Dorsolateral prefrontal cortex (tissue), 120 donors: ENCODE measurements at regions of chr12 and their contacts with region 1.

Region 1: GRCh38 chr12:121499929-121500793 is 80.7 kb downstream of the KDM2B start:
- DNase-seq: peak; percentile 75 to 88 (median 82)
- H3K4me3 ChIP-seq: peak overlapping the region in 51 of 59 donors; percentile 6 to 58 (median 38)
- H3K27ac ChIP-seq: peak overlapping the region in 52 of 59 donors; percentile 8 to 90 (median 71)
- H3K27me3 ChIP-seq: no peaks in the 10 kb centered on the region
- CTCF ChIP-seq: peak; percentile 91 to 100 (median 97)

Region 2: GRCh38 chr12:121579981-121580868 is 80.1 kb after region 1 on chr12:
- intact Hi-C with region 1: loop called in 1 of 2 experiments (anchors 5 kb)
- DNase-seq: peak; percentile 71 to 82 (median 76)
- H3K4me3 ChIP-seq: peak overlapping the region; percentile 42 to 90 (median 75)
- H3K27ac ChIP-seq: peak overlapping the region; percentile 72 to 97 (median 94)
- H3K27me3 ChIP-seq: no peaks in the 10 kb centered on the region
- CTCF ChIP-seq: peak in 3 of 56 donors; percentile 3 to 17 (median 4)

Region 3: GRCh38 chr12:121614872-121615467 is 114.8 kb after region 1 on chr12:
- intact Hi-C with region 1: loop called in 1 of 2 experiments (anchors 5 kb)
- DNase-seq: no peak
- H3K4me3 ChIP-seq: no peak overlapping the region
- H3K27ac ChIP-seq: no peak overlapping the region
- H3K27me3 ChIP-seq: no peaks in the 10 kb centered on the region
- CTCF ChIP-seq: no peak

Region 4: DNA sequence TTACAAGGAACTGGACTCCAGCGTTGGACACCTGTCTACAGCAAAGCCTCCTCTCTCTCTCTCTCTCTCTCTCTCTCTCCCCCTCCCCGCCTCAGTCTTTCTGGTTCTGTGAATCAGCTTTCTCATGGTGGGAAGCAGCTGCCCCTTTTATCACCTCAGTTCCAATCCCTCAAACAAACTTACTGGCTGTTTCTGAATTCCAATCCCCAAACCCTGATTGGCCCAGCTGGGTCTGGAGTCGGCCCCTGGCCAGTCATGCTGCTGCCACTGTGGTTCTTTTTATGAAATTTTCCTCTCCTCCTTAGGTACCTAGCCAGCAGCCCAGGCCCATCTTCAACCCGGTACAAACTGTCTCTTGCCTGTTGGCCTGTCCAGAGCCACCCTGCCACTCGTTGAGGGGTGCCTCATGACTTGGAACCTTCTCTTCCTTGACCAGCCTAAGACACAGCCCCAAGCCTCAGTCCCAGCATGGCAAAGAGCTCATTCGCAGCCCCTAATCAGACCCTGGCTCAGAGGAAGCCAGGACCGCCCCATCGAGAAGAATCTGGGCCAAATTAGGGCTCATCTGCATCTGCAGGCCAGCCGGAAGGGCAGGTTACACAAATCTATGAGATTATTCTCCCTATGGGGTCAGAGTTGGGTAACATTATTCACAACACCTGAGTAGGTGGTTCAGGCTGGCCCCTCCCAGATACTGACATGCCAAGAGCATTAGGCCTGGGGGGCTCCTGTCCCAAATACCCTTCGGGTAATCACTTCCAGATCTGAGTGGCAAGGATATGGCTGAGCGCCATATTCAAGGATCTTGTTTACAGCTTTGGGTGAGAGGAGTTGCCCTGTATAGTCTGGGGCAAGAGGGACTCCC is 178.8 kb after region 1 on chr12:
- intact Hi-C with region 1: loop called in 1 of 2 experiments (anchors 5 kb)
- DNase-seq: no peak
- H3K4me3 ChIP-seq: no peak overlapping the region
- H3K27ac ChIP-seq: peak overlapping the region in 50 of 59 donors; percentile 13 to 85 (median 60)
- H3K27me3 ChIP-seq: no peaks in the 10 kb centered on the region
- CTCF ChIP-seq: no peak

Region 5: DNA sequence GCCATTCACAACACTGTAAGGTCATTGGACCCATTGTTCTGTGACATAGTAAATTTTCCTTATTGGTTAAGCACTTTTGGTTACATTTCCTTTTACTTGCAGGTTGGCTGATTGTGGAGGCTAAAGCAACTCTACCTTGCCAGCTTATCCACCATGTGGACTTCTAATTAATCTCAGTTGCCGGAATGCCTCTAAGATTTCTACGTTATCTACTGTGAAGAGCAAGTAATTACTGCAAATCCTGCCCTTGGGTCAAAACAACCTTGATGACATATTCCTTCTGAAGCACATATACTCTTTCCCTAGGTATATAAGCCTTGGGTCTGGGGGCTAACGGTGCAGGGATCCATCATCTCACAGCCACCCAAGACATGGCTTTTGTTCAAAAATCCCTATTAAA is 188.8 kb after region 1 on chr12:
- intact Hi-C with region 1: loop called (anchors 5 kb)
- DNase-seq: no peak
- H3K4me3 ChIP-seq: no peak overlapping the region
- H3K27ac ChIP-seq: no peak overlapping the region
- H3K27me3 ChIP-seq: no peaks in the 10 kb centered on the region
- CTCF ChIP-seq: no peak